WTC11 (cell line): ENCODE measurements at regions of chr20 and their contacts with region 1.

Region 1: DNA sequence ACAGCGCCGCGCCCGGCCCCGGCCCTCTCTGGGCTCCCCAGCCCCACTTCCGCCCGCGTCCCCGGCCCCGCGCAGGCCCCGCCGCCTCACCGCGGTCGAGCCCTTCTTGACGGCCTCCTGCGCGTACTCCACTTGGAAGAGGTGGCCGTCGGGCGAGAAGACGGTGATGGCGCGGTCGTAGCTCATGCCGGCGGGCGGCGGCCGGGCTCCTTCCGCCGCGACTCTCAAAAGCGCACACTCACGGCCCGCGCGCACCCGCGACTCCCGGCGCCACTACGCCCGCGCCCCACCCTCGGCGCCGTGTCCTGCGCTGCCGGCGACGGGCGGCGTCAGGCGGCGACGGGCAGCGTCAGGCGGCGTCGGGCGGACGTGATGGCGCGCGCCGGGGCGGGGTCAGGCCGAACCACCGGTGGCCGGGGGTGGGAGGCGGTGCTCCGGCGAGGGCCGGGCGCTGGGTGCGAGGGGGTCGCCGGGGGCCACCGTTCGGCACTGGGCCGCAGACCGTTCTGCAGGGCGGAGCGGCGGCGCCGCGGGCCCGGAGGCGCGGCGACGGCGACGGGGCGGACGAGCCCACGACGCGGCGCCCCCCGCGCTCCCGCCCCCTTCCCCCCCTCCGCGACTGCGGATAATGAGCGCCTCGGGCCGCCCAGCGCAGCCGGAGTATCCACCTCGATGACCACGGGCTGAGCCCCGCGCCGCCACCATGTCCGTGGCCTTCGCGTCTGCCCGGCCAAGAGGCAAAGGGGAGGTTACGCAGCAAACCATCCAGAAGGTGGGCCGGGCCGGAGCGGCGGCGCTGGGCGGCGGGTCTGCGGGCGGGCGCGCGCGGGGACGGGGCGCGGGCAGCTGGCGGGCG is at the starts of genes PSMA7 and SS18L1:
- DNase-seq: peak; percentile 76
- ATAC-seq: peak; percentile 77
- H3K4me3 Mint-ChIP-seq: peak within 1 kb of the TSS; percentile 87
- H3K27ac Mint-ChIP-seq: peak within 1 kb of the TSS; percentile 94
- H3K4me1 Mint-ChIP-seq: peaks cover 30% of the 10 kb centered on the region
- H3K27me3 Mint-ChIP-seq: no peaks in the 10 kb centered on the region
- CTCF ChIP-seq: no peak
- total RNA-seq, gene PSMA7: 315 to 364 TPM (median 321 TPM) in 3 replicates
- total RNA-seq, gene SS18L1: 29.4 to 34.1 TPM (median 29.8 TPM) in 3 replicates

Region 2: GRCh38 chr20:61803915-61804804 is 339.2 kb before region 1 on chr20:
- CTCF ChIA-PET with region 1: no interaction called
- POLR2A ChIA-PET with region 1: no interaction called
- DNase-seq: no peak
- ATAC-seq: no peak
- H3K4me3 Mint-ChIP-seq: no peak overlapping the region
- H3K27ac Mint-ChIP-seq: no peak overlapping the region
- H3K4me1 Mint-ChIP-seq: peaks cover 5% of the 10 kb centered on the region
- H3K27me3 Mint-ChIP-seq: peaks cover 11% of the 10 kb centered on the region
- CTCF ChIP-seq: no peak

Region 3: GRCh38 chr20:62156592-62157386 is 13.4 kb after region 1 on chr20:
- CTCF ChIA-PET with region 1: interaction called, 27 read pairs
- POLR2A ChIA-PET with region 1: no interaction called
- DNase-seq: peak; percentile 86
- ATAC-seq: peak; percentile 84
- H3K4me3 Mint-ChIP-seq: no peak overlapping the region
- H3K27ac Mint-ChIP-seq: no peak overlapping the region
- H3K4me1 Mint-ChIP-seq: peaks cover 28% of the 10 kb centered on the region
- H3K27me3 Mint-ChIP-seq: no peaks in the 10 kb centered on the region
- CTCF ChIP-seq: peak; percentile 72